Calu3 (cell line): ENCODE measurements at regions of chr5 and their contacts with region 1.

Region 1: GRCh38 chr5:132820162-132820754 is 7.2 kb downstream of the SOWAHA start:
- DNase-seq: peak; percentile 94
- H3K4me3 Mint-ChIP-seq: no peak overlapping the region
- H3K27ac Mint-ChIP-seq: no peak overlapping the region
- H3K4me1 Mint-ChIP-seq: peaks cover 9% of the 10 kb centered on the region
- H3K27me3 Mint-ChIP-seq: no peaks in the 10 kb centered on the region
- CTCF ChIP-seq: peak; percentile 91

Region 2: DNA sequence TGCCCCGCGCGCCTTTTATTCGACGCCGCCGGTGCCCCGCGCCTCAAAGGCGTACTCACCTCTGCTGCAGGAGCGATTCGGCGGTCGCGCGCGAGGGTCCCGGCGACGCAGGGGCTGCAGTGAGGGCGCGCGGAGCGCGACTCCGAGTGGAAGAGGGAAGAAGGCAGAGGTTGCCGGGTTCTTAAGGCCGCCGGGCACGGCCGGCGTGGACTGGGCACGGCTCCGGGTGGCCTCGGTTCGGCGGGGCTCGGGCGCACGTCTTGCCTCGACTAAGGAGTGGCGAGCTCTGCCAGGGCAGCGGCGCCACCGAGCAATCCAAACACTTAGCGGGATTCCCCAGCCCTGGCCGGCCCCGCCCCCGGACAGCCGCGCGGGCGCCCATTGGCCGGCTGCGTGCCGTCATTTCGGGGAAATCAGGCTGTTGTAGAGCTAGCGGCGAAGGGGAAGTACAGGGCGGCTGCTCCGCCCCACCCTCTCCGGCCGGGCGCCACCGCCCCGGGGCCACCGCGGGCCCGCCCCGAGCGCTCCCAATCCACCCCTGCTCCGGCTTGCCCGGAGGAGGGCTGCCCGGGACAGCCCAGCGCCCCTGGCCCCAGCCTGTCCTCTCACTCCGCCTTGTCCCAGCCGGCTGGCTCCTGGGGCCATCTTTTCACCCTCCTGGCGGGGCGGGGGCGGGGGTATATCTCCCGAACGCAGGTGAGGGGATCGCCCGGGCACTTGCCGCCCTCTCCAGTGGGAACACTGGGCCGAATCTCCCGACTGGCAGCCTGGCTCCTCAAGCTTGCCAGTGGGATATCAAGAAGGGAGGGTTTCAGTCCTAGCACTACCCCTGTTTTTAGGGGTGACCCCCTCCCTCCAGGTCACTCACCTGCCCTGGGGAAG is 329.5 kb before region 1 on chr5 and contains the start of gene IRF1:
- CTCF ChIA-PET with region 1: interaction called, 13 read pairs
- intact Hi-C with region 1: no loop called
- DNase-seq: peak; percentile 99
- H3K4me3 Mint-ChIP-seq: peak within 1 kb of the TSS; percentile 89
- H3K27ac Mint-ChIP-seq: peak within 1 kb of the TSS; percentile 76
- H3K4me1 Mint-ChIP-seq: peaks cover 46% of the 10 kb centered on the region
- H3K27me3 Mint-ChIP-seq: no peaks in the 10 kb centered on the region
- CTCF ChIP-seq: no peak
- total RNA-seq, gene IRF1: 64.0 and 82.4 TPM in 2 replicates

Region 3: DNA sequence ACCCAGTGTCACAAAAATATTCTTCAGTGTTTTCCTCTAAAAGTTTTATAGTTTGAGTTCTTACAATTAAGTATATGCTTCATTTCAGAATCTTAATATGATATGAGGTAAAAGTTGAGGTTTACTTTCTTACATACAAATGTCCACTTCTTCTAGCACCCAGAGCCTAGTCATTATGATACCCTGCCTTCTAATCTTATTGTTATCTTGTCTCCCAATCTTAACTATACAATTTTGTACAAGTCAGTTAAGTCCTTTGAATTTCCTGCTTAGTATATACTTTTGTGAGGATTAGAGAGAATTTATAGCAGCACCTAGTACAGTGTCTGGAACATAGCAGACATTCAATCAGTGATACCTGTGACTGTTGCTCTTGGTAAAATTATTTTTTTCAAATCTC is 234.2 kb before region 1 on chr5:
- CTCF ChIA-PET with region 1: no interaction called
- intact Hi-C with region 1: loop called (anchors 10 kb)
- DNase-seq: no peak
- H3K4me3 Mint-ChIP-seq: no peak overlapping the region
- H3K27ac Mint-ChIP-seq: no peak overlapping the region
- H3K4me1 Mint-ChIP-seq: no peaks in the 10 kb centered on the region
- H3K27me3 Mint-ChIP-seq: no peaks in the 10 kb centered on the region
- CTCF ChIP-seq: no peak

Region 4: DNA sequence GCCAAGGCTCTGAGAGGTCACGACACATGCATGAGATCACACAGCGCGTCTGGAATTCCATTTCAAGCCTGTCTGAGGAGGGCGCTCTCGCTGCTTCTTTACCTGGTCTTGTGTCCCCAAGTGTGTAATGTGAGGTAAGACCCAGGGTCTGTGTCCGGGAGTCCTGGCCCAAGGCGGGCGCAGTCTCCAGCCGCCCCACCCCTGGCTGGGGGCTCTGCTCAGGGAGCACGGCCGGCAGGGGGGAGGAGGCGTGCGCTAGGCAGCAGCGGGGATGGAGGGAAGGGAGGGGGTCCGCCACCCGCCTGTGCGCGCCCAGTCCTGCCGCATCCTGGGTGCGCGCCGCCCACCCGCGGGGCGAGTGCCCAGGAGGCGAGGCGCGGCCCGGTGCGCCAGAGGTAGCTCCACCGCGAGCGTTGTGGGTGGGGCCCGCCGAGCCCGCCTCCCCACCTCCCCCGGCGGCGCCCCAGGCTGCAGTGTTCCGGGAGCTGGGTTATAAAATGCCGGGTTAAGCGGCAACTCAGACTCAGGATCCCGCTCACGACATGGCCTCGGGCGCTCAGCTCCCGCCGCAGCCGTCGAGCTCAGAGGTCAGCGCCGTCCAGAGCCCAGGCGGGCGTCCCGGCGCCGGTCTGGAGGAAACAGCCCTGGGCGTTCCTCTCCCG is 73.2 kb before region 1 on chr5 and contains the start of gene CCNI2:
- CTCF ChIA-PET with region 1: interaction called, 28 read pairs
- intact Hi-C with region 1: no loop called
- DNase-seq: peak; percentile 68
- H3K4me3 Mint-ChIP-seq: peak within 1 kb of the TSS; percentile 66
- H3K27ac Mint-ChIP-seq: no peak within 1 kb of the TSS
- H3K4me1 Mint-ChIP-seq: no peaks in the 10 kb centered on the region
- H3K27me3 Mint-ChIP-seq: no peaks in the 10 kb centered on the region
- CTCF ChIP-seq: no peak
- total RNA-seq, gene CCNI2: 3.3 and 3.4 TPM in 2 replicates

Region 5: GRCh38 chr5:132777209-132778069 is 42.8 kb before region 1 on chr5 and contains the start of gene SEPTIN8:
- CTCF ChIA-PET with region 1: interaction called, 10 read pairs
- intact Hi-C with region 1: no loop called
- DNase-seq: peak; percentile 68
- H3K4me3 Mint-ChIP-seq: peak within 1 kb of the TSS; percentile 50
- H3K27ac Mint-ChIP-seq: no peak within 1 kb of the TSS
- H3K4me1 Mint-ChIP-seq: peaks cover 29% of the 10 kb centered on the region
- H3K27me3 Mint-ChIP-seq: peaks cover 9% of the 10 kb centered on the region
- CTCF ChIP-seq: no peak
- total RNA-seq, gene SEPTIN8: 40.4 and 48.5 TPM in 2 replicates